ENCODE measurements at regions of chr22 and their contacts with region 1.

Region 1: GRCh38 chr22:41621099-41621910 is at the start of gene XRCC6:
- DNase-seq: peak; percentile 100
- ATAC-seq: peak; percentile 95
- H3K4me3 Mint-ChIP-seq: peak within 1 kb of the TSS; percentile 98
- H3K27ac Mint-ChIP-seq: peak within 1 kb of the TSS; percentile 98
- H3K4me1 Mint-ChIP-seq: peaks cover 49% of the 10 kb centered on the region
- H3K27me3 Mint-ChIP-seq: no peaks in the 10 kb centered on the region
- CTCF ChIP-seq: no peak
- total RNA-seq, gene XRCC6: 424 to 425 TPM

Region 2: DNA sequence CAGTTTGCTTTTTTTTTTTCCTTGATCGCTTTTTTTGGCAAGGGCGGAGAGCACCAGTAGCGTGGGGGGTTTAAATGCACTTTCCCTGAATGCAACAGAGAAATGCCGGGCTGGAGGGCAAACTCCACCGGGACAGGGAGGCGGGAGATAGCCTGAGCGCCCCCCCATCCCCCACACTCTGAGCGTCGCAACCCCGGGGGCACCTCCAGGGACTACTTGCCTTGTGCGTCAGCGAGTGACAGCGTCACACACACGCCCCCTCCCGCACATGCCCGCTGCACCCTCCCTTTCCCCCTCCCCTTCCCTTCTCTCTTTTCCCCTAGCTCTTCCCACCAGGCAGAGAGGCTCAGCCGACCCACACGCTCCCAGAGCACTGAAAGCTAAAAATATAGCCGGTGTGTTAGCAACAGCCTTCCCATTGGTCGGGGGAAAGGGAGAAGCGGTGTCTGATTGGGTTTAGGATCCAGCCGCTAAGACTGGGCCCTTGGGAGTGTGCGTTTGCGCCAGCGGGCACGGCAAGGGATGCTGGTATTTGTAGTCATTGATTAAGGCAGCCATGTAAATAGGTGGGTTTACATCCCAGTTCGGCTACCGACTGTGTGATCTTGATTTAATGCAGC is 173.0 kb before region 1 on chr22:
- CTCF ChIA-PET with region 1: no interaction called
- POLR2A ChIA-PET with region 1: interaction called, 13 read pairs
- intact Hi-C with region 1: no loop called
- DNase-seq: peak; percentile 95
- ATAC-seq: peak; percentile 67
- H3K4me3 Mint-ChIP-seq: peak overlapping the region; percentile 90
- H3K27ac Mint-ChIP-seq: peak overlapping the region; percentile 99
- H3K4me1 Mint-ChIP-seq: peaks cover 10% of the 10 kb centered on the region
- H3K27me3 Mint-ChIP-seq: no peaks in the 10 kb centered on the region
- CTCF ChIP-seq: no peak

Region 3: DNA sequence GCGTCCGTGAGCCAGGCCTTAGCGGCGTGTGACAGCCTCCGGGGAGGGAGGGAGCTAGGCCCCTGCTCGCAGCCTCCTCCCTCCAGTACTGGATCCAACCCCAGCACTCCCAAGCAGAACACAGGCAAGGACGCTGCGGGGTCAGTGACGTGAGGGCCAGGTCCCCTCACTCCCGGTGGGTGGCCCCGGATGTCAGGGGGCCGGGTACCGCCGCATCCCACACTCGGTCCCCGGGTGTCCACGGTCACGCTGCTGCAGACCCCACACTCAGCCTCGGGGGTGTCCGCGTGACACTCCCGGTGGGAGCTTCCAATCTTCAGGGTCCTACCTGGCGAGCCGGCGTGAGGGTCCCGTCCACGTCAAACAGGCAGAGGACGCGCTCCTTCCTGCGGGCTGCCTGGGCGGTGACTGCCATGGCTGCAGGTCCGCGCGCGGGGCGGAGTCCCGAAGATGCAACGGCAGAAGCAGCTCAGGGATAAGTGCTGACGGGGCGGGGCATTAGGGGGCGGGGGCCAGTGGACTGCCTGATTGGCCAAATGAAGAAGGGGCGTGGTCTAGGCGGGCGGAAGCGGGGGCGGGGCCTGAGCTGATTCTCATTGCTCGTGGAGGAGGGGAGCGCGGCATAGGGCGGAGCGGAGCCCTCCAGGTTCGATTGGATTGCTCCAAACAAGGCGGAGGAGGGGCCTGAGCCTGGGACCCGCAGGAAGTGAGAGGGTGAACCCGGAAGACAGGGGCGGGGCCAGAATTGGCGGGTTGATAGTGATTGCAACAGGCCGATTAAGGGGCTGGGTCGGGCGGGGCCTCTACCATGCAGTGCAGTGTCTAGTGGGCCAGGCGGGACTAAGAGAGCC is 31.7 kb before region 1 on chr22 and contains the start of gene PMM1:
- CTCF ChIA-PET with region 1: interaction called, 4 read pairs
- POLR2A ChIA-PET with region 1: interaction called, 37 read pairs
- intact Hi-C with region 1: loop called (anchors 1 kb)
- DNase-seq: peak; percentile 100
- ATAC-seq: peak; percentile 98
- H3K4me3 Mint-ChIP-seq: peak within 1 kb of the TSS; percentile 95
- H3K27ac Mint-ChIP-seq: peak within 1 kb of the TSS; percentile 88
- H3K4me1 Mint-ChIP-seq: peaks cover 12% of the 10 kb centered on the region
- H3K27me3 Mint-ChIP-seq: no peaks in the 10 kb centered on the region
- CTCF ChIP-seq: no peak
- total RNA-seq, gene PMM1: 29.8 to 29.9 TPM

Region 4: DNA sequence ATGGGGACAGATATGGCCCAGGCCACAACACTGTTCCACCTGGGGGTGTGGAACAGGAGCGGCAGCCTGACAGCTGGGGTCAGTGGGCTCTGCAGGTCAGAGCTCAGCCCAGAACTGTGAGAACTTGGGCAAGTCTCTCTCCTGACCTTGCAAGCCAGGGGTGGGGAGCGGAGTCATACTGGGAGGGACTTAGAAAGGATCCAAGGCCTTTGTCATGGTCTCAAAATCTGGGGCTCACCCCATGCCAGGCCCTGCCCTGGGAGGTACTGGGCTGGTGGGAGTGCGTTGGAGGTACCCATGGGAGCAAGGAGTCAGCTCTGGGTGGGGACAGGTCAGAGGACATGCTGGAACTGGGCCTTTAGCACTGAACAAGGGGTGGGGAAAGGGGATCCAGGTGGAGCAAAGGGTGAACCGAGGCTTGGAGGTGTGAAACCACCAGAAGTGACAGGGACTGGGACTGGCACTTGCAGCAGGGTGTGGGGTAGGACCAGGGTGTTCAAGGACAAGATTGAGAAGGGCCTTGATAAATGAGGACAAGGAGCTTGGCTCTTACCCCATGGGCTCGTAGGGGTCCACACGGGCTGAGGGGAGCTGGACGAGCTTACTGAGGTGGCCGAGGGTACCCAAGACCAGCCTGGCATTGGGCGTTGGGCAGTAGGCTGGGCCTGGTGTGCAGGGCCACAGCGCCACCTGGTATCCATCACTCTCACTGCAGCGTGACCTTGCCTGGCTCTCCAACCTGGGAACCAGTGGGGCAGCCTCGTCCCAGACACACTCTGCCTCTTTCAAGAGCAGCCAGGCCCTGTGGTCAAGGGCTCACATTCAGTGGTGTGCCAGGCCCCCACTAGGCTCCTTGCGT is 24.3 kb before region 1 on chr22:
- CTCF ChIA-PET with region 1: interaction called, 4 read pairs
- POLR2A ChIA-PET with region 1: interaction called, 13 read pairs
- intact Hi-C with region 1: no loop called
- DNase-seq: peak; percentile 60
- ATAC-seq: peak; percentile 82
- H3K4me3 Mint-ChIP-seq: no peak overlapping the region
- H3K27ac Mint-ChIP-seq: no peak overlapping the region
- H3K4me1 Mint-ChIP-seq: no peaks in the 10 kb centered on the region
- H3K27me3 Mint-ChIP-seq: no peaks in the 10 kb centered on the region
- CTCF ChIP-seq: peak; percentile 62

Region 5: DNA sequence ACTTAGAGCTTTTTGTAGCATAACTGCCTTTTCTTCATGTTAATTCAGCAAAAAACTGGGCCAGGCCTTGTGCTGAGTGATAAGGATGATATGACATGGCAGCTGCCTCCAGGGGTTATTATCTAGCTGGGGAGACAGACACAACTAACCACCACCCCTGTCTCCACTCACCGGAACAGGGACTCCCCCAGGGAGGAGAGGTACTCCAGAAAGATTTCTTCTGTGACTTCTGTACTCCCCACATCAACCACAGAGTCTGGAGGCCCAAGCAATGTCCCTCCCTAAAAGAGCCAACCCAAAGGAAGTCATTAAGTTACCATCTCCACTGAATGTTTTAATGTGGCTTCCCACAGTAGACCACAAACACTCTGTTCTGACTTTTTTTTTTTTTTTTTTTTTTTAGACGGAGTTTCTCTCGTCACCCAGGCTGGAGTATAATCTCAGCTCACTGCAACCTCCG is 17.4 kb before region 1 on chr22:
- CTCF ChIA-PET with region 1: interaction called, 10 read pairs
- POLR2A ChIA-PET with region 1: interaction called, 26 read pairs
- intact Hi-C with region 1: no loop called
- DNase-seq: peak; percentile 88
- ATAC-seq: peak; percentile 98
- H3K4me3 Mint-ChIP-seq: peak overlapping the region; percentile 13
- H3K27ac Mint-ChIP-seq: peak overlapping the region; percentile 65
- H3K4me1 Mint-ChIP-seq: peaks cover 33% of the 10 kb centered on the region
- H3K27me3 Mint-ChIP-seq: no peaks in the 10 kb centered on the region
- CTCF ChIP-seq: no peak

Region 6: GRCh38 chr22:41636467-41636866 is 15.2 kb after region 1 on chr22:
- CTCF ChIA-PET with region 1: interaction called, 3 read pairs
- POLR2A ChIA-PET with region 1: interaction called, 18 read pairs
- intact Hi-C with region 1: no loop called
- DNase-seq: no peak
- ATAC-seq: no peak
- H3K4me3 Mint-ChIP-seq: no peak overlapping the region
- H3K27ac Mint-ChIP-seq: peak overlapping the region; percentile 49
- H3K4me1 Mint-ChIP-seq: peaks cover 5% of the 10 kb centered on the region
- H3K27me3 Mint-ChIP-seq: no peaks in the 10 kb centered on the region
- CTCF ChIP-seq: no peak

Region 7: DNA sequence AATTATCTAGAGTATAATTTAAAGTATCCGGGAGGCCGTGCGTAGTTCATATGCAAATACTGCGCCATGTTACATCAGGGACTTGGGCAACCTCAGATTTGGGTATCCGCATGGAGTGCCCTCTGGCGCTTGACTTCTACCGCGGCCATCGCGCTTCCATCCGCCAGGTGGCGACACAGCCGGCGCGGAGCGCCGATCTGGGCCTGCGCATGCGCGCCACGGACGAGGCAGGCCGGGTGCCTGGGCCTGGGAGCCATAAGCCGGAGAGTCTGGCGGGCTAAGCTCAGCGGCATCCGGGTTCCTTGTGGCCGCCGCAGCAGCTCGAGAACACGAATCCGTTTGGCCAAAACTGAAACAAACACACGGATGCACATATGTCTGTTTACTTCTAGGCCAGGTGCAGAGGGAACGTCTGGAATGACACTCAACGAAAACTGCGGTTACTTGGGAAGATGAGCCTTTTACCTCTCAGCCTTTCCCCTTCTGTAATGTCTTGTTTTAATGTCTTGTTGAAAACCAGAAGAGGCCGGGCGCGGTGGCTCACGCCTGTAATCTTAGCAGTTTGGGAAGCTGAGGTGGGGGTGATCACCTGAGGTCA is 45.5 kb after region 1 on chr22:
- CTCF ChIA-PET with region 1: interaction called, 13 read pairs
- POLR2A ChIA-PET with region 1: interaction called, 6 read pairs
- intact Hi-C with region 1: no loop called
- DNase-seq: peak; percentile 91
- ATAC-seq: peak; percentile 96
- H3K4me3 Mint-ChIP-seq: peak overlapping the region; percentile 76
- H3K27ac Mint-ChIP-seq: peak overlapping the region; percentile 94
- H3K4me1 Mint-ChIP-seq: peaks cover 11% of the 10 kb centered on the region
- H3K27me3 Mint-ChIP-seq: no peaks in the 10 kb centered on the region
- CTCF ChIP-seq: peak; percentile 96

Region 8: DNA sequence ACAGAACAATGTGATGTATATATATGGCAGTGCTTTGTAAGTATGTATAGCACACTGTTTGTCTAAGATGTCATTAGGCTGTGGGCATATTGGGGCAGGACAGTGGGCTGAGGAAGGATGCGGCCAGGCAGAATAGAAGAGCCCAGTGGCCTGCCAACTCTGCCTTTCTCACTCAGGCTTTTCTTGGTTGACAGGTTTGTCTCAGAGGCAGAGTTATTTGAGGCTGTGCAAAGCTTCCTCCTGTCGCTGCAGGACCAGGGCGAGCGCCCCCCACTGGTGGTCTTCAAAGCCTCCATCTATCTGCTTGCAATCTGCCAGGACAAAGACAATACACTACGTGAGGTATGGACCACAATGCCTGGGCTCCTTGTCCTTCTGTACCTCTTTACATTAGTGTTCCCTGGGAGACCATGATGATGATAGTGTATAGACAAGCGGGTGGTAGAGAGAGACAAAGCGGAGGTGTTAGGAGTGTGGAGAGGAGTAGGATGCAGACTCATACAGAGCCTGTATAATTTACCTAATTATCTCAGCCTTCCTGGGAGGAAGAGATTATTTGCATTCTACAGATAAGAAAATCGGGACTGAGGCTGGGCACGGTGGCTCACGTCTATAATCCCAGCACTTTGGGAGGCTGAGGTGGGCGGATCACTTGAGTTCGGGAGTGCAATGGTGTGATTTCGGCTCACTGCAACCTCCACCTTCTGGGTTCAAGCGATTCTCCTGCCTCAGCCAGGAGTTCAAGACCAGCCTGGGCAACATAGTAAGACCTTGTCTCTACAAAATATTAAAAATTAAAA is 141.9 kb after region 1 on chr22:
- CTCF ChIA-PET with region 1: no interaction called
- POLR2A ChIA-PET with region 1: no interaction called
- intact Hi-C with region 1: no loop called
- DNase-seq: peak; percentile 68
- ATAC-seq: peak; percentile 66
- H3K4me3 Mint-ChIP-seq: no peak overlapping the region
- H3K27ac Mint-ChIP-seq: no peak overlapping the region
- H3K4me1 Mint-ChIP-seq: peaks cover 2% of the 10 kb centered on the region
- H3K27me3 Mint-ChIP-seq: no peaks in the 10 kb centered on the region
- CTCF ChIP-seq: peak; percentile 62

Measured in activated CD8-positive, alpha-beta T cell treated with anti-CD3 and anti-CD28 coated beads for 36 hours (primary cell).